ENCODE measurements at regions of chr1 and their contacts with region 1.

Region 1: GRCh38 chr1:19251305-19252196 is at the starts of genes EMC1 and MRTO4:
- DNase-seq: peak; percentile 70
- ATAC-seq: peak; percentile 93
- H3K4me3 ChIP-seq: peak within 1 kb of the TSS; percentile 61 to 97 (median 91)
- H3K27ac ChIP-seq: peak within 1 kb of the TSS; percentile 98
- H3K4me1 ChIP-seq: peaks cover 38% of the 10 kb centered on the region
- H3K27me3 ChIP-seq: no peaks in the 10 kb centered on the region; a peak in 1 of 5 replicates
- CTCF ChIP-seq: peak; percentile 16; the same call in 1 of the 2 replicates
- EP300 ChIP-seq: no peak
- POLR2A ChIP-seq: peak; percentile 91
- RAD21 ChIP-seq: peak; percentile 43
- total RNA-seq, gene EMC1: 22.1 and 61.3 TPM in 2 replicates
- total RNA-seq, gene MRTO4: 59.2 and 63.3 TPM in 2 replicates

Region 2: DNA sequence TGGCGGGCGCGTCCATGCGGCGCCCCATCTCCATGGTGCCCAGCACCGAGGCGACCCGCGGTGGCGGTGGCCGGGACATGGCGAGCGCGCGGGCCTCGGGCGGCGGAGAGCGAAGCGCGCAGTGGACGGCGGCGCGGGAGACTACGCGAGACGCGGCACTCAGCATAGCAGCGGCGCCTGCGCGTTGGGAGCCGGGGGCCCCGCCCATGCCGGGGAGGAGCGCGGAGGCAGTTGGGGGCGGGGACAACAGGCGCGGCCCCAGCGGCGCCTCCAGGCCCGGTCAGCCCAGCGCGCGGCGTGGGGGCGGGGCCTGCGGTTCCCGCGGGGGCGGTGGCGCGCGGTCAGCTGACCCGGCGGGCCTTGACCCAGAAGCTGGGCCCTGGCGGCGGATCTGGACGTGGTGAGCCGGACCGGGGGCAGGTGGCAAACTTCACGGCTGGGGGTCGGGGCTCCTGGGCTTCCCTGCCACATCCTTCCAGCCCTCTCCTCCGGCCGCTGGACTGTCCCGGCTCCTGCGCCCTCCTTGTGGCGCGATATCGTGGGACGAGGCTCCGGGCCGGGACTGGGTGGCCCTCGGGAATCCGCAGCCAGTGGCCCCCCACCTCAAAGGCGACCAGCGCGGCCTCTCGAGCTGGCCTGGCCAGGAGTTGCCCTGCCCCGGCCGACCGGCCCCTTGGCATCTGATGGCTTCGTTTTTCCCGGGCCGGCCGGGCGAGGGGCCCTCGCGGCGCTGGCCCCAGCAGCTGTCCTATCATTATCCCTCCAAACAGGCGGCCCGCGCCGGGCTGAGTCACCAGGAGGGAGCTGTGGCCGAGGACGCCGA is 60.6 kb after region 1 on chr1 and contains the starts of genes AKR7A2 and SLC66A1:
- CTCF ChIA-PET with region 1: no interaction called
- POLR2A ChIA-PET with region 1: interaction called, 21 read pairs
- in situ Hi-C with region 1: no loop called
- intact Hi-C with region 1: loop called (anchors 2 kb)
- DNase-seq: peak; percentile 82
- ATAC-seq: peak; percentile 86
- H3K4me3 ChIP-seq: peak within 1 kb of the TSS; percentile 85 to 95 (median 93)
- H3K27ac ChIP-seq: peak within 1 kb of the TSS; percentile 83
- H3K4me1 ChIP-seq: peaks cover 67% of the 10 kb centered on the region
- H3K27me3 ChIP-seq: no peaks in the 10 kb centered on the region; a peak in 1 of 5 replicates
- CTCF ChIP-seq: no peak; the same call in 1 of the 2 replicates
- EP300 ChIP-seq: 0 out of 4 replicates have a peak, but pooled peaks of 1 of the 2 experiments have one; percentile 8
- POLR2A ChIP-seq: peak; percentile 79 to 89
- RAD21 ChIP-seq: peak; percentile 40
- total RNA-seq, gene AKR7A2: 75.6 and 91.8 TPM in 2 replicates
- total RNA-seq, gene SLC66A1: 8.5 and 18.9 TPM in 2 replicates